Uterus (tissue), 4 donors: ENCODE measurements at regions of chr11 and their contacts with region 1.

Region 1: GRCh38 chr11:61639816-61640443 is 40.3 kb upstream of the DAGLA start:
- DNase-seq: no peak
- H3K4me3 ChIP-seq: no peak overlapping the region
- H3K27ac ChIP-seq: no peak overlapping the region
- H3K4me1 ChIP-seq: no peaks in the 10 kb centered on the region
- H3K27me3 ChIP-seq: no peaks in the 10 kb centered on the region
- CTCF ChIP-seq: no peak
- POLR2A ChIP-seq: no peak

Region 2: DNA sequence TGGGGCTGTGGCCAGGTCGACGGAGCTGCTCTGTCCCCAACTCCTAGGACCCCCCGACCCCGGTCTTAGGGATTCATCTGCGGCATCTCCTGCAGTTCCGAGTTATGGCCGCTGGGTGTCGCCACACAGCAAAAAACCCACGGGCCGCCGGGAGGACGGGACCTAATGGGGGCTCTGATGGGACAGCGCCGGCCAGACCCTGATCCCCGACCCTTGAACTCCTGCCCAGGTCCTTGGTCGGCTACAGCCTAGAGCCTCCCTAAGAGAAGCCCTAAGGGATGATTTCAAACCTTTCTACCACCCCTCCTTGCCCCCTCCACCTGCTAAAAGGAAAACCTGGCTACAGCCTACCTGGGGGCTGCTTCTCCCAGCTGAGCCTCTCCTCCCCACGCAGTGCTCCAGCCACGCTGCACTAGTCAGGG is 162.2 kb before region 1 on chr11:
- intact Hi-C with region 1: loop called (anchors 5 kb)
- DNase-seq: peak; percentile 47 to 60
- H3K4me3 ChIP-seq: no peak overlapping the region
- H3K27ac ChIP-seq: no peak overlapping the region
- H3K4me1 ChIP-seq: no peaks in the 10 kb centered on the region
- H3K27me3 ChIP-seq: no peaks in the 10 kb centered on the region
- CTCF ChIP-seq: peak; percentile 87 to 90 (median 88)
- POLR2A ChIP-seq: no peak

Region 3: GRCh38 chr11:61657566-61657965 is 17.6 kb after region 1 on chr11:
- intact Hi-C with region 1: no loop called
- DNase-seq: no peak
- H3K4me3 ChIP-seq: no peak overlapping the region
- H3K27ac ChIP-seq: no peak overlapping the region
- H3K4me1 ChIP-seq: no peaks in the 10 kb centered on the region
- H3K27me3 ChIP-seq: no peaks in the 10 kb centered on the region
- CTCF ChIP-seq: no peak
- POLR2A ChIP-seq: no peak